PC-3 (cell line): ENCODE measurements at regions of chr4 and their contacts with region 1.

Region 1: DNA sequence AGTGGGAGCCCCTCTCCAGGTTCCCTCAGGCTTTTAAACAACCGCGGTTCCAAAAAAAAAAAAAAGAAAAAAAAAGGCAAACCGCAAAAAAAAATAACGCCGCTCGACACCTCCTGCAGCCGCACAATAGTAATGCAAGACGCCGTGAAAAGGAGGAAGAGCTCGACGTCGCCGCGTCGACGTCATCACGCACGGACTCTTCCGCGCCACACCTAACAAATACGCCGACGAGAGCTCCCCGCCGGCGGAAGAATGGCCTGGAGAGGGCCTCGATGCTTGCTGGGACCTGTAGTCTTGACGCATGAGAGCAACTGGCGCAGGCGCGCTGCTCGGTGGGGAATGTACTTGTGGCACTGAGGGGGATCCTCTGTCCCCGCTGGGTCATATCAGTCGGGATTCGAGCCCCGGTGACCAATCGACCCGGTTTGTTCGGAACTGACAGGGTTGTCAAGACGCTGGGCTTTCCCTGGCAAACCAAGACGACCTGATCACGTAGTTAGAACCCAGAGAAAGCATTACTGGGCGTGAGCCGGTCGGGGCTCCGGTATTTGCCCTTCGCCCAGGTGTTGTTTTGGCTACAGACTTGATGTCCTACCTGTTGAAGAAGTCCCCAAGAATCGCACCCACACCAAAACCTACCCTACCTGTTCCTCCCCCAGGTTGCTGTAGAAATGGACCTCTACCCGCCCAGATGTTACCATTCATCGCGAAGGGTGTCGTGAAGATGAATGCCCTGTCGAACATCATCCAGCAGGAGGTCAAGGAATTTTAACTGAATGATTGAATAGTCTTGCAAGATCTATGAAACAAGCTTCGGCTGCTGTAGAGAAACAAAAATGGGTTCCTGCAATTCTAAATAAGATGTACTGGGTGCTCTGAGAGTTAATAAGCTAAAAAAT is at the start of gene CBR4:
- DNase-seq: peak; percentile 95
- ATAC-seq: peak; percentile 75
- H3K4me3 ChIP-seq: peak within 1 kb of the TSS; percentile 87
- H3K27ac ChIP-seq: peak within 1 kb of the TSS; percentile 98
- H3K4me1 ChIP-seq: peaks cover 84% of the 10 kb centered on the region
- H3K27me3 ChIP-seq: no peaks in the 10 kb centered on the region
- CTCF ChIP-seq: no peak; the same call in 1 of the 2 replicates
- total RNA-seq, gene CBR4: 7.4 and 12.6 TPM in 2 replicates

Region 2: DNA sequence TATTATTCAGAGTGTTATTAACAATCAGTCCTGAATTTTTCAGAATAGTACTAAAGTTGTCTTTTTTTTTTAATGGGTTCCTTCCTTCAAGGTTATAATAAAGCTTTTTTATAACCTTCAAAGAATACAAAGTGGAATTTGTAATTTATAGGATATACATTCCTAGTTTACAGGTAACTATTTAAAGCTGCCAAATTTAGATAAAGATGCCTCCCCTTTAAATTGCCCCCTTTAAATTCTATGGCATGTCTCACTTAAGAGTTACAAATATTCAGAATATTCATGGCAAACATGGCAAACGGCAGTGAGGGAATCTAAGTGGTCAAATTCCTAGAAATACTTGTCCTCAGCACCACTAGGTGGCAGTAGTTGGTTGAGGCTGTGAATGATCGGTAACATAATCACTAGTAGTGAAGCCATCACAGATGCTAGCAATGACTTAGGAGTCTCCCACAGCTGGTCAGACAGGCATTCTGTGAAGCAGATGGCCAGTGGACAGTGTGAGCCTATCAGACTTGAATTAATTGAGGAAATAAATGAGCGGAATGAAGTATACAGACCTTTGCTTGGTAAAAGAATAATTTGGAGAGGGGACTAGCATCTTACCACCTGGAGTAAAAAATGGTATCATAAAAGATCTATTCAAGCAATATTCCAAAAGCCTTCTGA is 86.7 kb before region 1 on chr4:
- CTCF ChIA-PET with region 1: interaction called, 6 read pairs
- POLR2A ChIA-PET with region 1: no interaction called
- intact Hi-C with region 1: loop called (anchors 1 kb)
- DNase-seq: peak; percentile 74
- ATAC-seq: peak; percentile 78
- H3K4me3 ChIP-seq: no peak overlapping the region
- H3K27ac ChIP-seq: no peak overlapping the region
- H3K4me1 ChIP-seq: no peaks in the 10 kb centered on the region
- H3K27me3 ChIP-seq: no peaks in the 10 kb centered on the region
- CTCF ChIP-seq: peak; percentile 80

Region 3: DNA sequence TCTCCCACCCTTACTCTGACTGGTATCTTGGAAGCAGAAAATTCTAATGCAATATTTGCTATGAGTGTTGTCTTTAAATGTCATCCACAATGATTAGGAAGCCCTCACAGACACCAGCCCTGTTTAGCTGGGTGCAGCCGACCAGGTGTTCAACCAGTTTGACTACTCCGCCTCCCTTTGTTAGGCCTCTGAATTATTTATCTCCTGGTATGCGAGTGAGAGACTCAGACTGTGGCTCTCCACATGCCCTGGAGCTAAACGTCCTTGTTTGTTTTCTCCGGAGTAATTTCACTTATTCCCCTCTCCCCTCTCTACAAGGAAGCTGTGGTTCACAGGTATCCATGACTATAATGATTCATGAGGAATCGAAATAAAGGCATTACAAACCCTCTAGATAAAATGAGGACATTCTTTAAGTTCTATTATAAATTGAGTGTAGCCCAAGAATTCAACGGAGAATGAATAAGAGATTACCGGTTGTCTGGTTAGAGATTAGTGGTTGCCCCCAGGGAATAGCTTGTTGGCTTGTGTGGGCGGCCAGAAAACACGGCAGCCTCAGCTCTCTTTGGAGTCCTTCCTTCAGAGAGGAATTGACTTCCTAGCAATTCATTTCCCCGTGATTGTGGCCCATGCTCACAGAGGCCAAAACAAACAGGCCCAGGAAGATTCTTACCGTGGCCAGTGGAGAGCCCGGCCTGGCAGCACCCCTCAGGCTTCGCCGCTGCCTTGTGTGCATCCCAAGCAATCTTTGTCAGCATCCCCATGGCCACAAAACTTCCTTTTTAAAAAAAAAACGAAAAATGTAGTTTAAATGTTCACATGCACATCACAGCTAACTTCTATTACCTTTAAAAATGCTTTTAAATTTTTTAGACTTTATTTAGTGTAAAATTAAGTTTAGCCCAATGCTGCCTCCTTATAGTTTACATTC is 59.9 kb after region 1 on chr4:
- CTCF ChIA-PET with region 1: interaction called, 4 read pairs
- POLR2A ChIA-PET with region 1: interaction called, 11 read pairs
- intact Hi-C with region 1: loop called (anchors 1 kb)
- DNase-seq: peak; percentile 97
- ATAC-seq: peak; percentile 88
- H3K4me3 ChIP-seq: peak overlapping the region; percentile 47
- H3K27ac ChIP-seq: peak overlapping the region; percentile 99
- H3K4me1 ChIP-seq: peaks cover 32% of the 10 kb centered on the region
- H3K27me3 ChIP-seq: no peaks in the 10 kb centered on the region
- CTCF ChIP-seq: no peak

Region 4: DNA sequence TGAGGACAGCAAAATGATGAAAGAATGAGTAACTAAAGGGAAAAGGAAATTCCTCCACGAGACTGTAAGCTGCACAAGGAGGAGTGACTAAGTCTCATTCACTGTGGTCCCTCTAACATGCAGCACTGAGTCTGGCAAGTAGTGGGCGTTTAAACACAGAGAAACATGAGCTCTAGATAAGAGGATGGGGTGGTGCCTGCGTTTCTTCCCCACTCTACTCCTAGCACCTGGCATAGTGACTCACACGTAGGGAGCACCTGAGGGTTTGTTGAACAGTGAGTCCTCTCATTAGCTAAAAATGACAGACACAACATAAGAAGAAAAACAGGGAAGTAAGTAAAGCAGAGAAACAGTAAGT is 105.5 kb after region 1 on chr4:
- CTCF ChIA-PET with region 1: no interaction called
- POLR2A ChIA-PET with region 1: interaction called, 10 read pairs
- intact Hi-C with region 1: loop called (anchors 5 kb)
- DNase-seq: peak; percentile 87
- ATAC-seq: peak; percentile 96
- H3K4me3 ChIP-seq: no peak overlapping the region
- H3K27ac ChIP-seq: peak overlapping the region; percentile 85
- H3K4me1 ChIP-seq: peaks cover 30% of the 10 kb centered on the region
- H3K27me3 ChIP-seq: no peaks in the 10 kb centered on the region
- CTCF ChIP-seq: peak; percentile 33

Region 5: DNA sequence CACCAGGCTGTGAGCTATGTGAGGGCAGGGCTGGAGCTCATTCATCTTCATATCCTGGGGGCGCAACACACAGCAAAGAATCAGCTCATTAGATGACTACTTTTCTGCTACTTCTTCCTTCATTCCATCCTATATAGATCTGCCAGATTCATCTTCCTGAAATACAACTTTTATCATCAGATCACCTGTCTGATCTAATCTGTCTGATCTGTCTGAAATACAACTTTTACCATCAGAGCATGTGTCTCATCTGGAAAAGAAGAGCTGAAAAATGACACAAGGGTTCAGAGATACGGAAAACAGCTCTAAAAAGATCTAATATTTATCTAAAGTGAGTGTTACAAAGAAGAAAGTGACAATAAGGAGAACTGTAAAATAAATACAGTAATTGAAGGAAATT is 160.2 kb after region 1 on chr4:
- CTCF ChIA-PET with region 1: interaction called, 10 read pairs
- POLR2A ChIA-PET with region 1: no interaction called
- intact Hi-C with region 1: no loop called
- DNase-seq: no peak
- ATAC-seq: no peak
- H3K4me3 ChIP-seq: no peak overlapping the region
- H3K27ac ChIP-seq: no peak overlapping the region
- H3K4me1 ChIP-seq: peaks cover 16% of the 10 kb centered on the region
- H3K27me3 ChIP-seq: no peaks in the 10 kb centered on the region
- CTCF ChIP-seq: no peak